CD8-positive, alpha-beta T cell (primary cell): ENCODE measurements at regions of chr2 and their contacts with region 1.

Region 1: GRCh38 chr2:173402405-173402974 is 47.8 kb downstream of the CDCA7 start:
- DNase-seq: peak; percentile 48 to 84 (median 72)
- ATAC-seq: peak; percentile 70
- H3K4me3 ChIP-seq: no peak overlapping the region
- H3K4me3 Mint-ChIP-seq: no peak overlapping the region
- H3K27ac ChIP-seq: no peak overlapping the region
- H3K27ac Mint-ChIP-seq: no peak overlapping the region
- H3K4me1 ChIP-seq: no peaks in the 10 kb centered on the region
- H3K4me1 Mint-ChIP-seq: peaks cover 4% of the 10 kb centered on the region
- H3K27me3 ChIP-seq: peaks cover 5 to 10% of the 10 kb centered on the region in 2 experiments
- H3K27me3 Mint-ChIP-seq: peaks cover 49% of the 10 kb centered on the region
- CTCF ChIP-seq: peak; percentile 68

Region 2: GRCh38 chr2:172735582-172736423 is 666.7 kb before region 1 on chr2 and contains the start of gene RAPGEF4:
- CTCF ChIA-PET with region 1: no interaction called
- POLR2A ChIA-PET with region 1: no interaction called
- intact Hi-C with region 1: no loop called
- DNase-seq: peak in 2 of 9 experiments; percentile 3 to 7
- ATAC-seq: no peak
- H3K4me3 ChIP-seq: peak within 1 kb of the TSS in 1 of 2 experiments; percentile 31
- H3K4me3 Mint-ChIP-seq: peak within 1 kb of the TSS; percentile 80
- H3K27ac ChIP-seq: no peak within 1 kb of the TSS
- H3K27ac Mint-ChIP-seq: no peak within 1 kb of the TSS
- H3K4me1 ChIP-seq: no peaks in the 10 kb centered on the region
- H3K4me1 Mint-ChIP-seq: peaks cover 9% of the 10 kb centered on the region
- H3K27me3 ChIP-seq: peaks cover 6 to 9% of the 10 kb centered on the region in 2 experiments
- H3K27me3 Mint-ChIP-seq: peaks cover 50% of the 10 kb centered on the region
- CTCF ChIP-seq: no peak
- total RNA-seq, gene RAPGEF4: 1.1 to 1.4 TPM

Region 3: DNA sequence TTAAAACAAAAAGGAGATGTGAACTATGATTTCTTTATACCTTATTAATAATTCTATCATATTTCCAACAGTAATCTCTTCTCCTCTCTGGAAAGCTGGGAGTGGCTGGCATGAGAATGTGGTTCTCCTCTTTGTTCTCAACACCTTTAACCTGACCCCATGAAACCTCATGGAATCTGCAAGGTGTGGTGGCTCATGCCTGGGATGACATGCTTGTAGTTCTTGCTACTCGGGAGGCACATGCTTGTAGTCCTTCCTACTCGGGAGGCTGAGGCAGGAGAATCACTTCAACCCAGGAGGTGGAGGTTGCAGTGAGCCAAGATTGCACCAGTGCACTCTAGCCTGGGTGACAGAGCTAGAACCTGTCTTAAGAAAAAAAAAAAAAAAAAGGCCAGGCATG is 58.6 kb before region 1 on chr2:
- CTCF ChIA-PET with region 1: no interaction called
- POLR2A ChIA-PET with region 1: no interaction called
- intact Hi-C with region 1: loop called in 1 of 2 experiments (anchors 2 kb)
- DNase-seq: no peak
- ATAC-seq: no peak
- H3K4me3 ChIP-seq: no peak overlapping the region
- H3K4me3 Mint-ChIP-seq: no peak overlapping the region
- H3K27ac ChIP-seq: no peak overlapping the region
- H3K27ac Mint-ChIP-seq: no peak overlapping the region
- H3K4me1 ChIP-seq: no peaks in the 10 kb centered on the region
- H3K4me1 Mint-ChIP-seq: no peaks in the 10 kb centered on the region
- H3K27me3 ChIP-seq: no peaks in the 10 kb centered on the region
- H3K27me3 Mint-ChIP-seq: no peaks in the 10 kb centered on the region
- CTCF ChIP-seq: no peak

Region 4: DNA sequence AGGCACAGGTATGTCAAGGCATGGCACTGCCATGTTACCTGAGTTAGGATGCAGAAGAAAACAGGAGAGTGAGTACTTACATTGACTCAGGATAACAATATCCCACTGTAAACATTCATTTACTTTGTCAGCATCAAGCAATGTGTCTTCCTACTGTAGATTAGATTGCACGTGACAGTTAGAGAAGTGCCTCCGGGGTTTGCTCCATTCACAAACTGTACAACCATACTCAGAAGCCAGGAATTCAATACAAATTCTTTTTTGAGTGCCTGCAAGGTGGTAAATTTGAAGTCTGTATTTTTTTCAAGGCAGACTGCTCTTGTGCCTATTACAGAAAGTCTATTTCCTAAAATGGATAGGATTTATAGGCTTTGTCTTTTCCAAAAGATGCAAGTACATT is 13.7 kb before region 1 on chr2:
- CTCF ChIA-PET with region 1: interaction called, 13 read pairs
- POLR2A ChIA-PET with region 1: no interaction called
- intact Hi-C with region 1: no loop called
- DNase-seq: no peak
- ATAC-seq: no peak
- H3K4me3 ChIP-seq: no peak overlapping the region
- H3K4me3 Mint-ChIP-seq: no peak overlapping the region
- H3K27ac ChIP-seq: no peak overlapping the region
- H3K27ac Mint-ChIP-seq: no peak overlapping the region
- H3K4me1 ChIP-seq: no peaks in the 10 kb centered on the region
- H3K4me1 Mint-ChIP-seq: no peaks in the 10 kb centered on the region
- H3K27me3 ChIP-seq: no peaks in the 10 kb centered on the region
- H3K27me3 Mint-ChIP-seq: peaks cover 4% of the 10 kb centered on the region
- CTCF ChIP-seq: no peak

Region 5: DNA sequence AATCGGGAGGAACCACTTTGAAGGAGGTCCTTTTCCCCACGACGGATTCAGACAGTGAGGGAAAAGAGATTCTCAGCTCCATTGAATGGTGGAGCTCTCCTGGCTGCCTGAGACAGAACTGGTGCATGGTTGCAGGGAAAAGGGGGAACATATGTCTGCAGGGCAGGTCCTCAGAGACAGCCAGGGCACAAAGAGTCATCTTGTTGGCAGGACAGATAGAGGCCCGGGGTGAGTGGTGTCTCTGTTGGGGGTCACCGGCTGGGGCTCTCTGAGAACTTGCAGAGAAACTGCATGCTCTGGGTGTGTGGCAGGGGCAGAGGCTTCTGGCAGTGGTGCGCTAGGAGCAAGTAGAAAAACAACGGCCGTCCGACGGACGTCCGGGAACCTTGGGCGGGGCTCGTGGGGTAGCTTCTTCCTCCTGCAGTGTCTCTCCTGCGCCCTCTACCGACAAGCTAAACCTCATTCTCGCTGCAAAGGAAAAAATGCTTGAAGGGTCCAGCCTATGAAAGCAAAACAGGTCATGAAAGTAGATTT is 46.5 kb after region 1 on chr2:
- CTCF ChIA-PET with region 1: interaction called, 4 read pairs
- POLR2A ChIA-PET with region 1: no interaction called
- intact Hi-C with region 1: loop called in 1 of 2 experiments (anchors 1 kb)
- DNase-seq: peak; percentile 16 to 76 (median 53)
- ATAC-seq: peak; percentile 40
- H3K4me3 ChIP-seq: no peak overlapping the region
- H3K4me3 Mint-ChIP-seq: peak overlapping the region; percentile 60
- H3K27ac ChIP-seq: no peak overlapping the region
- H3K27ac Mint-ChIP-seq: peak overlapping the region; percentile 60
- H3K4me1 ChIP-seq: peaks cover 8% of the 10 kb centered on the region
- H3K4me1 Mint-ChIP-seq: peaks cover 20% of the 10 kb centered on the region
- H3K27me3 ChIP-seq: no peaks in the 10 kb centered on the region
- H3K27me3 Mint-ChIP-seq: peaks cover 4% of the 10 kb centered on the region
- CTCF ChIP-seq: peak; percentile 28

Region 6: GRCh38 chr2:174078275-174078674 is 675.8 kb after region 1 on chr2:
- CTCF ChIA-PET with region 1: interaction called, 4 read pairs
- POLR2A ChIA-PET with region 1: no interaction called
- intact Hi-C with region 1: loop called in 1 of 2 experiments (anchors 2 kb)
- DNase-seq: peak in 2 of 9 experiments; percentile 5 to 14
- ATAC-seq: no peak
- H3K4me3 ChIP-seq: no peak overlapping the region
- H3K4me3 Mint-ChIP-seq: no peak overlapping the region
- H3K27ac ChIP-seq: no peak overlapping the region
- H3K27ac Mint-ChIP-seq: no peak overlapping the region
- H3K4me1 ChIP-seq: no peaks in the 10 kb centered on the region
- H3K4me1 Mint-ChIP-seq: no peaks in the 10 kb centered on the region
- H3K27me3 ChIP-seq: no peaks in the 10 kb centered on the region
- H3K27me3 Mint-ChIP-seq: no peaks in the 10 kb centered on the region
- CTCF ChIP-seq: peak; percentile 29

Region 7: GRCh38 chr2:174438146-174438886 is 1035.8 kb after region 1 on chr2:
- CTCF ChIA-PET with region 1: no interaction called
- POLR2A ChIA-PET with region 1: no interaction called
- intact Hi-C with region 1: loop called (anchors 10 kb)
- DNase-seq: no peak
- ATAC-seq: no peak
- H3K4me3 ChIP-seq: no peak overlapping the region
- H3K4me3 Mint-ChIP-seq: no peak overlapping the region
- H3K27ac ChIP-seq: no peak overlapping the region
- H3K27ac Mint-ChIP-seq: no peak overlapping the region
- H3K4me1 ChIP-seq: no peaks in the 10 kb centered on the region
- H3K4me1 Mint-ChIP-seq: no peaks in the 10 kb centered on the region
- H3K27me3 ChIP-seq: no peaks in the 10 kb centered on the region
- H3K27me3 Mint-ChIP-seq: no peaks in the 10 kb centered on the region
- CTCF ChIP-seq: no peak